ENCODE measurements at regions of chr1 and their contacts with region 1.

Region 1: GRCh38 chr1:107430540-107431228 is 289.8 kb downstream of the NTNG1 start:
- DNase-seq: peak; percentile 8
- H3K27ac ChIP-seq: no peak overlapping the region
- CTCF ChIP-seq: peak; percentile 66

Region 2: DNA sequence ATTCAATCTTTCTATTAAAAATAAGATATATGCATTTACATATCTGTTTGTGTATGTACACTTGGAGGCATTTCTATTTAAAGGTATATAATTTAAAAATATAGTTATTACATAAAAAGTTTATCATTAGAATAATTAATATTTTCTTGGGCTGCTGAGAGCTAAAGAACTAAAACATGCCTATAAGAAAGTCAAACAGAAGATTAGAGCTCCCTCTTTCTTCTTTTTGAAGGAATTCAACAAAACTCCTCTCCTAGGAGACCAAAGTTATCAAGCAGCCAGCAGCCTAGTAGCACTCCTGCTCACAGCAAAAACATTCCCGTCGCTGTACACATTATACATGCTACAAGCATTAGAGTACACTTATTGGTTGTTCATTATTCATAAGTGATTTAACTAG is 317.8 kb after region 1 on chr1:
- CTCF ChIA-PET with region 1: interaction called, 11 read pairs
- POLR2A ChIA-PET with region 1: no interaction called
- DNase-seq: peak; percentile 20
- H3K27ac ChIP-seq: no peak overlapping the region
- CTCF ChIP-seq: peak; percentile 33

Measured in RWPE1 (cell line).